ENCODE measurements at regions of chr5 and their contacts with region 1.

Region 1: GRCh38 chr5:40568548-40568947 is 111.2 kb upstream of the PTGER4 start:
- DNase-seq: no peak
- H3K4me3 Mint-ChIP-seq: no peak overlapping the region
- H3K27ac Mint-ChIP-seq: peak overlapping the region; percentile 82
- H3K4me1 Mint-ChIP-seq: peaks cover 21% of the 10 kb centered on the region
- H3K27me3 Mint-ChIP-seq: no peaks in the 10 kb centered on the region
- CTCF ChIP-seq: no peak

Region 2: DNA sequence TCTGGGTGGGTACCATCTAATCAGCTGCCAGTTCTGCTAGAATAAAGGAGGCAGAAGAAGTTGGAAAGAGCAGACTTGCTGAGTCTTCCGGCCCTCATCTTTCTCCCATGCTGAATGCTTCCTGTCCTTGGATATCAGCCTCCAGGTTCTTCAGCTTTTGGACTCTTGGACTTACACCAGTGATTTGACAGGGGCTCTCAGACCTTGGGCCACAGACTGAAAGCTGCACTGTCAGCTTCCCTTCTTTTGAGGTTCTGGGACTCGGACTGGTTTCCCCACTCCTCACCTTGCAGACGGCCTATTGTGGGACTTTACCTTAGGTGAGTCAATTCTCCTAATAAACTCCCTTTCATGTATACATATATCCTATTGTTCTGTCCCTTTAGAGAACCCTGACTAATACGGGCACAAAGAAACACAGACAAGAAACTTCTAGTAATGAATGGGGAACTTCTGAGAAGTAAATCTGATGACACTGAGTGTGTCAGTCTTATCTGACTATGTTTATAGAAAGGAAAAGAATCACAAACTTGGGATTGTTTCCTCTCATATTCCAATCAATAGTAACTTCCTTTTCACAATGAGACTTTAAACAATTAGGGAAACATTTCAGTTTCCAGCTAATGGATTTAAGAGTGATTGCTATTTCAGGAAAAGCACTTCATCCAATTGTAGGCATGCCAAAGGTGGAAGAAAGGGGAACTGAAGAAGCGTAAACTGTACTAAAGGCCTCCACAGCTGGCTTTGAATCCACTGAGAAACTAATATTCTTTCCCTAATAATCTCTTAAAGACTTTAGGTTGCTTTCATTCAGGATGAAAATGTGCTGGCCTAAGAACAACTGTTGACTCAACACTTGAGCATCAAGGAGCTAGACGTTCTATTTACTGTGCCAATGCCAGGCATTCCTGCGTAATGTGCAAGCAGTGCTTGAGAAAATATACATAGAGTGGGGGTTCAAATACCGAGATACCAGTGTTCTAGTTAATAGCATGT is 16.8 kb before region 1 on chr5:
- CTCF ChIA-PET with region 1: interaction called, 5 read pairs
- POLR2A ChIA-PET with region 1: interaction called, 12 read pairs
- intact Hi-C with region 1: no loop called
- DNase-seq: peak; percentile 86
- H3K4me3 Mint-ChIP-seq: peak overlapping the region; percentile 41
- H3K27ac Mint-ChIP-seq: peak overlapping the region; percentile 87
- H3K4me1 Mint-ChIP-seq: peaks cover 27% of the 10 kb centered on the region
- H3K27me3 Mint-ChIP-seq: no peaks in the 10 kb centered on the region
- CTCF ChIP-seq: no peak

Measured in MCF 10A (cell line).